ENCODE measurements at regions of chr11 and their contacts with region 1.

Region 1: GRCh38 chr11:66901964-66902390 is 45.1 kb downstream of the LRFN4 start:
- DNase-seq: no peak
- ATAC-seq: no peak
- H3K4me3 ChIP-seq: no peak overlapping the region
- H3K27ac ChIP-seq: no peak overlapping the region
- H3K4me1 ChIP-seq: peaks cover 17% of the 10 kb centered on the region
- H3K27me3 ChIP-seq: no peaks in the 10 kb centered on the region
- CTCF ChIP-seq: no peak
- POLR2A ChIP-seq: no peak
- RAD21 ChIP-seq: no peak

Region 2: DNA sequence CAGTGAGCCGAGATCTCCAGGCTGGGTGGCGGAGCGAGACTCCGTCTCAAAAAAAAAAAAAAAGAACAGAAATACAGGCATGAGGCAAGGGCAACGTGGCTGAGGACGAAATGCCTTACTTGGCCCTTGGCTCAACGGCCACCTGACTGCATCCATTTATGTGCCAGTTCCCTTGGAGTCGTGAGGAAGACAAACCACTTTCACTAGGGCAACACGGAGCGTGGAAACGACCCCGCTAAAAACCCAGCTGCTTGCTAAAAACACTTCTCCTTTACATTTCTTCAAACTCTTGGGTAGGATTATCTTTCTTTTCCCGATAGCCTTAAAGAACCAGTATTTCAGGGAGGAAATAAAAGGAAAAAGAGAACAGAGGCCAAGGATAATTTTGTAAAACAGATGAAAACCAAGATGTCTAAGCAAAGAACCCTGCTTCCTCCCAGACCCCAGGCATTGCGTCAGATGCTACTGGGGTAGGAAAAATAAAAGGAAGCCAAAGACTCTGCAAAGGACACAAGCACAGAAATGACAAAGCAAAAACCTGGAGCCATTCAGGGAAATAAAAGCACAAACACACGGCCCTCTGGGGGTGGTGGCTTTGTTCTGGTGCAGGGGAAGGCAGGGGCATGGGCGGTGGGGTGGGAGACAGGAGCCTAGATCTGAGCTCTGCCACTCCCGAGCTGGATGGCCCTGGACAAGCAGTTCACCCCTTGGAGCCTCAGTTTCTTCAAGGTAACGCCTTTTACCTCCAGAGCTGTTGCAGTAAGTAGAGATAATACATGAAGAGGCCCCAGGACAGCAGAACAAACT is 19.2 kb after region 1 on chr11:
- CTCF ChIA-PET with region 1: no interaction called
- POLR2A ChIA-PET with region 1: no interaction called
- dilution Hi-C with region 1: no loop called
- in situ Hi-C with region 1: no loop called
- intact Hi-C with region 1: loop called (anchors 1 kb)
- DNase-seq: no peak
- ATAC-seq: no peak
- H3K4me3 ChIP-seq: no peak overlapping the region
- H3K27ac ChIP-seq: no peak overlapping the region
- H3K4me1 ChIP-seq: peaks cover 5% of the 10 kb centered on the region; the same call in 1 of the 2 replicates
- H3K27me3 ChIP-seq: no peaks in the 10 kb centered on the region
- CTCF ChIP-seq: no peak
- POLR2A ChIP-seq: no peak
- RAD21 ChIP-seq: no peak

Measured in IMR-90 (cell line).